ENCODE measurements at regions of chr9 and their contacts with region 1.

Region 1: DNA sequence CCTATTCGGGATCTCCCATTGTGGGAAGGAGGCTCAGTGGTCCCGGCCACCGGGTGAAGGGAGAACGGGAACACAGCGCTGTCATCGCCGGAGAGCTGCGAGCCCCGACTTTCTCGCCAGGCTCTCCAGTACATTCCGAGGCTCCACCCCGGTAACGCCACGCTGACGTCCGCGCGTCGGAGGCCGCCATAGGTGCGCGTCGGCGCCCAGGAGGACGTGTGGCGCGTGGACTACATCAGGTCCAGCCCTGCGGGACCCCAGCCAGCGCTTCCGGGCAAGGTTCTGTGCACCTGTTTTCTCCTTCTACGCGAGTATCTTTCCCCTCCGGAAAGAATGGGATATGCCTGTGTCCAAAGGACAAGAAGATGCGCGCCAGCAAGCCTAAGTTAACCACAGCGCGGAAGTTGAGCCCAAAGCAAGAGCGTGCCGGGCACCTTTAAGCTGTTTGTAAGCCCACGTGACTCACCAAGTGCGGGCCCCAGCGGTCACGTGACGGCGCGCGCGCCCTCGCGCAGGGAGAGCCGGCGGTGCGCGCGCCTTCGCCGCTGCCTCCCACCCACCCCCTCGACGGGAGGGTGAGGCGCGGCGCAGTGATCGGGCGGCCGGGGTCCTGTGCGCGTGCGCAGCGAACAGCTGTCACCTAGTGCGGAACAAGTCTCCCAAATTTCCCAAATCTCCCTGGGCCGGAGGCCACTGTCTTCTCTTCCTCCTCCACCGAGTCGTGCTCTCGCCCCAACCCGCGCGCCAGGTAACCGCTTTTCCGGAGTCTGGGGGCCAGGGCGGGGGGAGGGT is at the start of gene KDM4C:
- DNase-seq: peak; percentile 87 to 97
- H3K4me3 ChIP-seq: peak within 1 kb of the TSS; percentile 71 to 91 (median 82)
- H3K27ac ChIP-seq: peak within 1 kb of the TSS; percentile 97
- H3K4me1 ChIP-seq: peaks cover 1 to 6% (median 4%) of the 10 kb centered on the region in 4 experiments; a peak in 5 of 7 replicates
- H3K27me3 ChIP-seq: no peaks in the 10 kb centered on the region
- CTCF ChIP-seq: no peak
- EP300 ChIP-seq: peak in 1 of 2 experiments; percentile 38; a peak in 1 of 3 replicates
- POLR2A ChIP-seq: peak; percentile 78 to 97
- RAD21 ChIP-seq: no peak
- total RNA-seq, gene KDM4C: 25.0 and 26.1 TPM in 2 replicates

Region 2: DNA sequence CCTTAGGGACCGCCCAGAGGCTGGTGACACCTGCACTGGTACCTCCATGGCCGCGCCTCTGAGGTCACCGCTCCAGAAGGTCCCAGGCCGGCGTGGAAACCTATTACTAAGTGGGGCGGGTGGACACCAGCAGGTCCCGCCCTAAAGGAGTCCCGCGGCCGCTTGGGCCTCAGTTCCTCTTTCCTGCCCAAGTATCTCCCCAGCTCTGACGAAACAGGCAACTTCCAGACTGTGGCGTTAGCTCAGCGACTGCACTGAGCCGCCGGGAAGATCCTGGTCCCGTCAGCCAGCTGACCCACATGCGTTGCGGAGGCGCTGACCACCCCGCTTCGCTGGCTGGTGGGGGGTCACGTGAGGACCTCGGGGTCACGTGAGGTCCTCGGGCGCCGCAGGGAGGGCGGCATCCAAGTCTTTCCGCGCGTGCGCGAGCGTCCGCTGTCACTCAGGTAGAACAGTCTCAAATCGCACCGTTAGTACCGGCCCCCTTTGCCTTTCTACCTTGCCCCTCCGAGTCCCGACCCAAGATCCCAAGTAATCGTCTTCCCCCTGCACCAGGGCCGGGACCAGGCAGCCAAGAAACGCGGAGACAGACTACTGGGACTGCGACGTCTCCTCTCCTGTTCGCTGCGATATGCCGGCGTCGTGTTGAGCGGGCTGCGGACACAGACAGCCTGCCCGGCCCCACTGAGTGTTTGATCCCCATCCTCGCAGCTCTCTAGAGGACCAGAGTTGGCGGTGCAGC is 53.6 kb before region 1 on chr9:
- CTCF ChIA-PET with region 1: no interaction called
- POLR2A ChIA-PET with region 1: interaction called, 18 read pairs
- DNase-seq: peak; percentile 94
- H3K4me3 ChIP-seq: peak overlapping the region; percentile 48 to 68 (median 62)
- H3K27ac ChIP-seq: peak overlapping the region; percentile 85; the same call in 1 of the 2 replicates
- H3K4me1 ChIP-seq: peaks cover 0 to 6% (median 2%) of the 10 kb centered on the region in 4 experiments; a peak in 3 of 7 replicates
- H3K27me3 ChIP-seq: no peaks in the 10 kb centered on the region
- CTCF ChIP-seq: no peak; a peak in 1 of 4 replicates
- EP300 ChIP-seq: 0 out of 3 replicates have a peak, but pooled peaks of 1 of the 2 experiments have one; percentile 38
- POLR2A ChIP-seq: peak; percentile 92 to 94
- RAD21 ChIP-seq: no peak; a peak in 1 of 4 replicates